B cell (primary cell): ENCODE measurements at regions of chr20 and their contacts with region 1.

Region 1: DNA sequence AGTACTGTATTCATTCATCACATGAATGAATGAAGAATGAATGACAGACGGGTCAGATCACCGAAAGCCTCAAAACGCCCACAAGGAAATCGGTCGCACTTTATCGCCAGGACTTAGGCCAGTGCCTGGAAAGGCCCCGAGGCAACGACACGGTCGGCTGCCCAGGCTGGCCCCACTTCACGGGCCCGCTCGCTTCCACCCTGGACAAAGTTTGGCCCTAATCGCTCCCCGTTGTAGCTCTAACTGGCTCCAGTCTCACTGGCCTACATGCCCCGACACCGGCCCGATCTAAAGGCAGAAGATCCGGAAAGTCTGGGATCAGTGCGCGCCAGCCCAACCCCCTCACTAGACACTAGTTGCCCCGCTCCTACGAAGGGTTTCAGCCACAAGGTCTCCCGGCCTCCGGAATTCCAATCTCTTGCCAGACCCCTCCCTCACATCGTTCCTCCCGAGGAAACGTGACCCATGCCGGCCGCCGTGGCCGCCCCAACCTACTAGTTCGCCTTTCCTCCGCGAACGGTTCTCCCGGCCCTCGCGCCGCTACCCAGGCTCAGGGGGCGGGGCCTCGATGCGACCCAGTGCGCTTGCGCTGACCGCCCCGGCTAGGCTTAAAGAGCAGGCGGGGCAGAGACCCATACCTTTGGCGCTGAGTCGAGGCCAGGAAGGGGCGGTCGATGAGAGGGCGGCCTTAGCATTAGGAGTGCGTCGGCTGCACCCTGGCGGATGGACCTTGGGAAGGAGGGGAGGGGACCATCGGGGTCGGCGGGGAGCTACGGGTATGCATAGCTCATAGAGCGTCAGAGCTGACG is at the starts of genes GSS and MYH7B:
- DNase-seq: peak; percentile 95
- ATAC-seq: peak; percentile 93
- H3K4me3 ChIP-seq: peak within 1 kb of the TSS; percentile 58 to 88 (median 73)
- H3K4me3 Mint-ChIP-seq: peak within 1 kb of the TSS; percentile 97
- H3K27ac ChIP-seq: peak within 1 kb of the TSS; percentile 42 to 79
- H3K27ac Mint-ChIP-seq: peak within 1 kb of the TSS; percentile 93
- H3K4me1 ChIP-seq: peaks cover 5 to 16% of the 10 kb centered on the region in 2 donors
- H3K4me1 Mint-ChIP-seq: peaks cover 25% of the 10 kb centered on the region
- H3K27me3 ChIP-seq: no peaks in the 10 kb centered on the region
- H3K27me3 Mint-ChIP-seq: no peaks in the 10 kb centered on the region
- CTCF ChIP-seq: no peak
- total RNA-seq, gene GSS: 22.0 and 22.5 TPM in 2 replicates
- total RNA-seq, gene MYH7B: 0.66 and 0.79 TPM in 2 replicates

Region 2: DNA sequence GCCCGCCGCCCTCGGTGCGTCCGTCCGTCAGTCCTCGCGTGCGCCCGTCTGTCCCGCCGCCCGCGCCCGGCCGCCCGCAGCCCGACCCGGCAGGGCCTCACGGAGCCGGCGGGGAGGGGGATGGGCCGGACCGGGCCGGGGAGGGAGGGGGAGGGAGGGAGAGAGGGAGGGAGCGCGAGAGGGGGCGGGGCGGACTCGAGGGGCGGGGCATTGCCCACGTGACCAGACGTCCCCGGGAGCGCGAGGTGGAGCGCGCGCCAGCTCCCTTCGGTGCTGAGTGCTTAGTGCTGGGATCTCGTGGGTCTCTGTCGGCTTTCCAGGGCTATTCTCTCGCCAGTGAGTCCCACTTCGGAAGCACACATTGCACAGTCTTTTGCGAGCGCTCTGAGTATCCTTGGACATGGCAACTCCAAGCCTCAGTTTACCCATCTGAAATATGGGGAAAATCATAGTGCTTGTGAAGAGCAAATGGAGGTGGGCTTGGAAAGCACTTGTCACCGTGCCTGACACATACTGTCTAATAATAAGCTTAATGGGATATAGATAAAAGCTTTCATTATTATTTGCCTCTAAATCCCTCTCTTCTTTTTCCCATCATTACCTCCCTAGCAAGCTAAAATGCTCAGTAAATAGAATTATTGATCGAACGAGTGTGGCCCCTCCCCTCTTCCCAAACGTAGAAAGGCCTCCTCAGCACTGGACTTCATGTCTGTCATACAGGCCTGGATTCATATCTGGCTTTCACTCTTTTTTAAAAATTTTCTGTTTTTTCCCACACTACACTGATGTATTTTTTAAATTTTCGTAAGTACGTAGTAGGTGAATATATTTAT is 129.7 kb before region 1 on chr20 and contains the start of gene NCOA6:
- CTCF ChIA-PET with region 1: no interaction called
- POLR2A ChIA-PET with region 1: no interaction called
- intact Hi-C with region 1: loop called (anchors 2 kb)
- DNase-seq: peak; percentile 88
- ATAC-seq: peak; percentile 74
- H3K4me3 ChIP-seq: peak within 1 kb of the TSS; percentile 68 to 94 (median 82)
- H3K4me3 Mint-ChIP-seq: peak within 1 kb of the TSS; percentile 94
- H3K27ac ChIP-seq: peak within 1 kb of the TSS; percentile 60 to 67
- H3K27ac Mint-ChIP-seq: peak within 1 kb of the TSS; percentile 92
- H3K4me1 ChIP-seq: peaks cover 19 to 21% of the 10 kb centered on the region in 2 donors
- H3K4me1 Mint-ChIP-seq: peaks cover 31% of the 10 kb centered on the region
- H3K27me3 ChIP-seq: no peaks in the 10 kb centered on the region
- H3K27me3 Mint-ChIP-seq: peaks cover 3% of the 10 kb centered on the region
- CTCF ChIP-seq: no peak
- total RNA-seq, gene NCOA6: 31.0 and 31.9 TPM in 2 replicates

Region 3: GRCh38 chr20:34943808-34944568 is 11.4 kb before region 1 on chr20:
- CTCF ChIA-PET with region 1: no interaction called
- POLR2A ChIA-PET with region 1: no interaction called
- intact Hi-C with region 1: no loop called
- DNase-seq: no peak
- ATAC-seq: no peak
- H3K4me3 ChIP-seq: no peak overlapping the region
- H3K4me3 Mint-ChIP-seq: no peak overlapping the region
- H3K27ac ChIP-seq: no peak overlapping the region
- H3K27ac Mint-ChIP-seq: no peak overlapping the region
- H3K4me1 ChIP-seq: no peaks in the 10 kb centered on the region
- H3K4me1 Mint-ChIP-seq: no peaks in the 10 kb centered on the region
- H3K27me3 ChIP-seq: no peaks in the 10 kb centered on the region
- H3K27me3 Mint-ChIP-seq: no peaks in the 10 kb centered on the region
- CTCF ChIP-seq: no peak